GM10248 (cell line): ENCODE measurements at regions of chr16 and their contacts with region 1.

Region 1: GRCh38 chr16:75550211-75550662 is 5.8 kb downstream of the TMEM231 start:
- DNase-seq: peak; percentile 58
- CTCF ChIP-seq: peak; percentile 64

Region 2: GRCh38 chr16:75471723-75472633 is 78.3 kb before region 1 on chr16:
- CTCF ChIA-PET with region 1: interaction called, 27 read pairs
- POLR2A ChIA-PET with region 1: no interaction called
- DNase-seq: peak; percentile 74
- CTCF ChIP-seq: peak; percentile 81

Region 3: DNA sequence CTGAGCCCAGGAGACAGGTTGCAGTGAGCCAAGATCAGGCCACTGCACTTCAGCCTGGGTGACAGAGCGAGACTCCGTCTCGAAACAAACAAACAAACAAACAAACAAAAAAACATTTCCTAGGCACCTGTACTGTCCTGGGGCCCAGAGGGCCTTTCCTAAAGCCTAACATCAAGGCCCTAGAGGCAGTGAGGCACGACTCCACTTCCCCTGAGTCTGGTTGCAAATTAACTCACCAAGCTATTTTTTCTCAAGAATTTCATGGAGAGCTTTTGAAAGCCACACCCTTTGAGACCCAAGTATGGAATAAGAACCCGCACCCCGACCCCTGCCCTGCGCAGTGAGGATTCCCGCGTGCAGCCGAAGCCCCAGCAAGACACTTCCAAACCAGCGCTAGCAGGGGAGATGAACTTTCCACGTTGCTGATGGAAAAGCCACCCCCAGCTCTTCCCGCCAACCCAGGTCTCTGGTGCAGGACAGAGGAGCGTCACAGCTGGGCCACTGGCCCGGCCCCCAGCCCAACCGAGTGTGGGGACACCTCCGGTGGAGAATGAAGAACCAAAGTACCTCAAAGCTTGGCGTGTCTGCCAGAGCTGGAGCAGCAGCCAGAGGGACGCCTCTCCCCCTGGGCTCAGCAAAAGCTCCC is 15.6 kb before region 1 on chr16:
- CTCF ChIA-PET with region 1: interaction called, 16 read pairs
- POLR2A ChIA-PET with region 1: no interaction called
- DNase-seq: no peak
- CTCF ChIP-seq: no peak

Region 4: DNA sequence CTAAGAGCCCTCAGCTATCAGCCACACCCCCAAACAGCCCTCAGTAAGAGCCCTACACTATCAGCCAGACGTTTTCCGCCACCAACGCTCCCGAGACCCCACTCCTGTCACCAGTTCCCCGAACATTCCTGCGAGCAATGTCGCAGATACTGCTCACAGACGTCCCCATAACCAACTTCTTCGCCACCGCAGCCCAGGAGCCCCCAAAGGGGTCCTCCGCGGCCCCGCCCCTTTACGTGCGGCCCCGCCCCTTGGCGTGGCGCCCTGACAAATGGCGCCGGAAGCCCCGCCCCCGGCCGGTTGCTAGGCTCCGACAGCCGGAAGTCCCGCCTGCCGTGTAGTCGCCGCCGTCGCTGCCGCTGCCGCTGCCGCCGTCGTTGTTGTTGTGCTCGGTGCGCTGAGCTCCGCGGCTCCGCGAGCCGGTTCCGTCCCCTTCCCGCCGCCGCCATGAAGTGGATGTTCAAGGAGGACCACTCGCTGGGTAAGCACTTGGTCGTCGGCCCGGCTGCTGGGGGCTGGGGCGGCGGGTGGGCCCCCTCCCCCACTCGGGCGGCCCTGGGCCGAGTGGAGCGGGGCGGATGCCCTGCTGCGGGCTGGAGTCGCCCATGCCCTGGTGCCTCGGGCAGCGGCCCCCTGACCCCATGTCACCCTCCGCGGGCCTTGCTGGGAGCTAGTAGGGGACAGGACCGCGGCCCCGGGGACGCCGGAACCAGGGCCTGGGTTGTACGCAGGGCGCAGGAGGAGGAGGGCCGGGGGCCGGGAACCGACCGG is 16.0 kb after region 1 on chr16 and contains the start of gene GABARAPL2:
- CTCF ChIA-PET with region 1: interaction called, 26 read pairs
- POLR2A ChIA-PET with region 1: interaction called, 3 read pairs
- DNase-seq: peak; percentile 91
- CTCF ChIP-seq: no peak